ENCODE measurements at regions of chr6 and their contacts with region 1.

Region 1: GRCh38 chr6:89080542-89081422 is at the start of gene PNRC1:
- DNase-seq: peak; percentile 100
- ATAC-seq: peak; percentile 72
- H3K4me3 ChIP-seq: peak within 1 kb of the TSS; percentile 96
- H3K4me3 Mint-ChIP-seq: peak within 1 kb of the TSS; percentile 95
- H3K27ac ChIP-seq: peak within 1 kb of the TSS; percentile 99 to 100
- H3K27ac Mint-ChIP-seq: peak within 1 kb of the TSS; percentile 97
- H3K4me1 ChIP-seq: peaks cover 31% of the 10 kb centered on the region
- H3K4me1 Mint-ChIP-seq: peaks cover 46% of the 10 kb centered on the region
- H3K27me3 ChIP-seq: no peaks in the 10 kb centered on the region
- H3K27me3 Mint-ChIP-seq: peaks cover 5% of the 10 kb centered on the region
- CTCF ChIP-seq: no peak
- total RNA-seq, gene PNRC1: 974 to 1,023 TPM

Region 2: GRCh38 chr6:87701676-87702588 is 1378.8 kb before region 1 on chr6 and contains the start of gene AKIRIN2:
- CTCF ChIA-PET with region 1: no interaction called
- POLR2A ChIA-PET with region 1: interaction called, 22 read pairs
- intact Hi-C with region 1: no loop called
- DNase-seq: peak; percentile 92 to 99 (median 96)
- ATAC-seq: peak; percentile 81
- H3K4me3 ChIP-seq: peak within 1 kb of the TSS; percentile 95
- H3K4me3 Mint-ChIP-seq: peak within 1 kb of the TSS; percentile 93
- H3K27ac ChIP-seq: peak within 1 kb of the TSS; percentile 87 to 90
- H3K27ac Mint-ChIP-seq: peak within 1 kb of the TSS; percentile 90
- H3K4me1 ChIP-seq: peaks cover 5% of the 10 kb centered on the region
- H3K4me1 Mint-ChIP-seq: peaks cover 46% of the 10 kb centered on the region
- H3K27me3 ChIP-seq: no peaks in the 10 kb centered on the region
- H3K27me3 Mint-ChIP-seq: no peaks in the 10 kb centered on the region
- CTCF ChIP-seq: no peak
- total RNA-seq, gene AKIRIN2: 91.0 to 92.5 TPM

Region 3: DNA sequence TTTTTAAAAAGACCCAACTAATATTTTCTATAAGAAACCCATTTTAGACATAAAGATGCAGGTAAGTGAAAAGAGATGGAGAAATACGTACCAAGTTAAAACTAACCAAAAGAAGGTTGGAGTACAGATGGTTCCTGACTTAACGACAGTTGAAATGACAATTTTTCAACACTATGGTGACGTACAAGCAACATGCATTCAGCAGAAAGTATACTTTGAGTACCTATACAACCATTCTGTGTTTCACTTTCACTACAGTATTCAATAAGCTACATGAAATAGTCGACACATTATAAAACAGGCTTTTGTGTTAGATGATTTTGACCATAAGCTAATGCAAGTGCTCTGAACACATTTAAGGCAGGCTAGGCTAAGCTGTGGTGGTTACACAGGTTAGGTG is 346.2 kb before region 1 on chr6:
- CTCF ChIA-PET with region 1: no interaction called
- POLR2A ChIA-PET with region 1: no interaction called
- intact Hi-C with region 1: no loop called
- DNase-seq: no peak
- ATAC-seq: no peak
- H3K4me3 ChIP-seq: no peak overlapping the region
- H3K4me3 Mint-ChIP-seq: no peak overlapping the region
- H3K27ac ChIP-seq: no peak overlapping the region
- H3K27ac Mint-ChIP-seq: no peak overlapping the region
- H3K4me1 ChIP-seq: no peaks in the 10 kb centered on the region
- H3K4me1 Mint-ChIP-seq: peaks cover 6% of the 10 kb centered on the region
- H3K27me3 ChIP-seq: no peaks in the 10 kb centered on the region
- H3K27me3 Mint-ChIP-seq: no peaks in the 10 kb centered on the region
- CTCF ChIP-seq: no peak

Region 4: GRCh38 chr6:88992741-88993552 is 87.8 kb before region 1 on chr6:
- CTCF ChIA-PET with region 1: no interaction called
- POLR2A ChIA-PET with region 1: interaction called, 11 read pairs
- intact Hi-C with region 1: loop called in 1 of 2 experiments (anchors 5 kb)
- DNase-seq: no peak
- ATAC-seq: no peak
- H3K4me3 ChIP-seq: no peak overlapping the region
- H3K4me3 Mint-ChIP-seq: no peak overlapping the region
- H3K27ac ChIP-seq: no peak overlapping the region
- H3K27ac Mint-ChIP-seq: no peak overlapping the region
- H3K4me1 ChIP-seq: no peaks in the 10 kb centered on the region
- H3K4me1 Mint-ChIP-seq: no peaks in the 10 kb centered on the region
- H3K27me3 ChIP-seq: no peaks in the 10 kb centered on the region
- H3K27me3 Mint-ChIP-seq: no peaks in the 10 kb centered on the region
- CTCF ChIP-seq: no peak

Region 5: GRCh38 chr6:89117211-89118108 is 36.7 kb after region 1 on chr6 and contains the start of gene SRSF12:
- CTCF ChIA-PET with region 1: no interaction called
- POLR2A ChIA-PET with region 1: interaction called, 50 read pairs
- intact Hi-C with region 1: no loop called
- DNase-seq: peak in 12 of 14 experiments; percentile 5 to 68 (median 24)
- ATAC-seq: peak; percentile 79
- H3K4me3 ChIP-seq: peak within 1 kb of the TSS; percentile 48
- H3K4me3 Mint-ChIP-seq: peak within 1 kb of the TSS; percentile 82
- H3K27ac ChIP-seq: no peak within 1 kb of the TSS
- H3K27ac Mint-ChIP-seq: no peak within 1 kb of the TSS
- H3K4me1 ChIP-seq: peaks cover 11% of the 10 kb centered on the region
- H3K4me1 Mint-ChIP-seq: peaks cover 8% of the 10 kb centered on the region
- H3K27me3 ChIP-seq: peaks cover 4 to 5% of the 10 kb centered on the region in 2 experiments
- H3K27me3 Mint-ChIP-seq: peaks cover 19% of the 10 kb centered on the region
- CTCF ChIP-seq: no peak
- total RNA-seq, gene SRSF12: not detected

Region 6: DNA sequence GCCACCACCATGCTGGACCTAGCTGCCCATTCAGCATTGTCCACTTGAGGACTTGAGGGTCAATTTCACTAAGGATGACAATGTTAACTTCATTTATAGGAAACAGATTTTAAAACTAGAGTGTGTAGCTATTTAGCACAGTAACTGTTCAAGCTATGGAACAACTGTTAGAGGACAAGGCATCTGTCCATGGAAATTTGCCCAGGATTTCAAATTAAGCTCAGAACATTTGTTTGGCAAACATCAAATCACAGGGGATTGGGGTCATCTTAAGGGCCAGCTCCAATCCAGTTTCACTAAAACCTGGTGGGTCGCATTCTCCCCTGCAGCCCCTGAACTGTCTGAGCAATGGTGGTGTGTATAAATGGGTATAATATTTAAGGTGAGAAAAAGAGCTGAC is 100.2 kb after region 1 on chr6:
- CTCF ChIA-PET with region 1: no interaction called
- POLR2A ChIA-PET with region 1: no interaction called
- intact Hi-C with region 1: no loop called
- DNase-seq: no peak
- ATAC-seq: no peak
- H3K4me3 ChIP-seq: no peak overlapping the region
- H3K4me3 Mint-ChIP-seq: no peak overlapping the region
- H3K27ac ChIP-seq: no peak overlapping the region
- H3K27ac Mint-ChIP-seq: no peak overlapping the region
- H3K4me1 ChIP-seq: no peaks in the 10 kb centered on the region
- H3K4me1 Mint-ChIP-seq: no peaks in the 10 kb centered on the region
- H3K27me3 ChIP-seq: peaks cover 0 to 4% of the 10 kb centered on the region in 2 experiments
- H3K27me3 Mint-ChIP-seq: peaks cover 5% of the 10 kb centered on the region
- CTCF ChIP-seq: no peak

Region 7: GRCh38 chr6:89260832-89261231 is 180.1 kb after region 1 on chr6:
- CTCF ChIA-PET with region 1: no interaction called
- POLR2A ChIA-PET with region 1: no interaction called
- intact Hi-C with region 1: no loop called
- DNase-seq: peak in 1 of 14 experiments; percentile 13
- ATAC-seq: peak; percentile 43
- H3K4me3 ChIP-seq: no peak overlapping the region
- H3K4me3 Mint-ChIP-seq: no peak overlapping the region
- H3K27ac ChIP-seq: no peak overlapping the region
- H3K27ac Mint-ChIP-seq: no peak overlapping the region
- H3K4me1 ChIP-seq: no peaks in the 10 kb centered on the region
- H3K4me1 Mint-ChIP-seq: peaks cover 8% of the 10 kb centered on the region
- H3K27me3 ChIP-seq: no peaks in the 10 kb centered on the region
- H3K27me3 Mint-ChIP-seq: no peaks in the 10 kb centered on the region
- CTCF ChIP-seq: no peak

Region 8: GRCh38 chr6:89352278-89353117 is 271.7 kb after region 1 on chr6 and contains the start of gene UBE2J1:
- CTCF ChIA-PET with region 1: no interaction called
- POLR2A ChIA-PET with region 1: interaction called, 95 read pairs
- intact Hi-C with region 1: loop called (anchors 5 to 10 kb)
- DNase-seq: peak; percentile 42 to 90 (median 64)
- ATAC-seq: peak; percentile 80
- H3K4me3 ChIP-seq: peak within 1 kb of the TSS; percentile 71
- H3K4me3 Mint-ChIP-seq: peak within 1 kb of the TSS; percentile 99
- H3K27ac ChIP-seq: peak within 1 kb of the TSS; percentile 69 to 71
- H3K27ac Mint-ChIP-seq: peak within 1 kb of the TSS; percentile 92
- H3K4me1 ChIP-seq: peaks cover 33% of the 10 kb centered on the region
- H3K4me1 Mint-ChIP-seq: peaks cover 69% of the 10 kb centered on the region
- H3K27me3 ChIP-seq: no peaks in the 10 kb centered on the region
- H3K27me3 Mint-ChIP-seq: no peaks in the 10 kb centered on the region
- CTCF ChIP-seq: no peak
- total RNA-seq, gene UBE2J1: 34.7 to 34.9 TPM

Region 9: GRCh38 chr6:89638320-89639195 is 557.8 kb after region 1 on chr6 and contains the start of gene LYRM2:
- CTCF ChIA-PET with region 1: no interaction called
- POLR2A ChIA-PET with region 1: interaction called, 22 read pairs
- intact Hi-C with region 1: no loop called
- DNase-seq: peak; percentile 80 to 95 (median 86)
- ATAC-seq: peak; percentile 95
- H3K4me3 ChIP-seq: peak within 1 kb of the TSS; percentile 93
- H3K4me3 Mint-ChIP-seq: peak within 1 kb of the TSS; percentile 97
- H3K27ac ChIP-seq: peak within 1 kb of the TSS; percentile 92 to 99
- H3K27ac Mint-ChIP-seq: peak within 1 kb of the TSS; percentile 98
- H3K4me1 ChIP-seq: peaks cover 15% of the 10 kb centered on the region
- H3K4me1 Mint-ChIP-seq: peaks cover 35% of the 10 kb centered on the region
- H3K27me3 ChIP-seq: no peaks in the 10 kb centered on the region
- H3K27me3 Mint-ChIP-seq: no peaks in the 10 kb centered on the region
- CTCF ChIP-seq: no peak
- total RNA-seq, gene LYRM2: 12.3 to 16.3 TPM

Region 10: GRCh38 chr6:90586836-90587638 is 1506.3 kb after region 1 on chr6 and contains the start of gene MAP3K7:
- CTCF ChIA-PET with region 1: no interaction called
- POLR2A ChIA-PET with region 1: interaction called, 10 read pairs
- intact Hi-C with region 1: loop called in 1 of 2 experiments (anchors 5 kb)
- DNase-seq: peak; percentile 80 to 97 (median 92)
- ATAC-seq: peak; percentile 85
- H3K4me3 ChIP-seq: peak within 1 kb of the TSS; percentile 94
- H3K4me3 Mint-ChIP-seq: peak within 1 kb of the TSS; percentile 98
- H3K27ac ChIP-seq: peak within 1 kb of the TSS; percentile 97 to 99
- H3K27ac Mint-ChIP-seq: peak within 1 kb of the TSS; percentile 96
- H3K4me1 ChIP-seq: peaks cover 15% of the 10 kb centered on the region
- H3K4me1 Mint-ChIP-seq: peaks cover 50% of the 10 kb centered on the region
- H3K27me3 ChIP-seq: peaks cover 0 to 9% of the 10 kb centered on the region in 2 experiments
- H3K27me3 Mint-ChIP-seq: peaks cover 9% of the 10 kb centered on the region
- CTCF ChIP-seq: no peak
- total RNA-seq, gene MAP3K7: 9.0 to 9.3 TPM